Activated CD4-positive, alpha-beta T cell treated with anti-CD3 and anti-CD28 coated beads for 36 hours (primary cell): ENCODE measurements at regions of chr14 and their contacts with region 1.

Region 1: GRCh38 chr14:37874429-37875191 is 279.2 kb downstream of the TTC6 start:
- DNase-seq: peak; percentile 89
- ATAC-seq: peak; percentile 84
- H3K4me3 Mint-ChIP-seq: no peak overlapping the region
- H3K27ac Mint-ChIP-seq: no peak overlapping the region
- H3K4me1 Mint-ChIP-seq: peaks cover 5% of the 10 kb centered on the region
- H3K27me3 Mint-ChIP-seq: no peaks in the 10 kb centered on the region

Region 2: GRCh38 chr14:37230551-37231194 is 643.9 kb before region 1 on chr14:
- CTCF ChIA-PET with region 1: interaction called, 10 read pairs
- POLR2A ChIA-PET with region 1: no interaction called
- intact Hi-C with region 1: loop called (anchors 1 to 5 kb)
- DNase-seq: no peak
- ATAC-seq: peak; percentile 30
- H3K4me3 Mint-ChIP-seq: no peak overlapping the region
- H3K27ac Mint-ChIP-seq: no peak overlapping the region
- H3K4me1 Mint-ChIP-seq: no peaks in the 10 kb centered on the region
- H3K27me3 Mint-ChIP-seq: no peaks in the 10 kb centered on the region

Region 3: GRCh38 chr14:37246427-37246914 is 628.1 kb before region 1 on chr14:
- CTCF ChIA-PET with region 1: interaction called, 9 read pairs
- POLR2A ChIA-PET with region 1: no interaction called
- intact Hi-C with region 1: loop called (anchors 1 kb)
- DNase-seq: no peak
- ATAC-seq: no peak
- H3K4me3 Mint-ChIP-seq: no peak overlapping the region
- H3K27ac Mint-ChIP-seq: no peak overlapping the region
- H3K4me1 Mint-ChIP-seq: no peaks in the 10 kb centered on the region
- H3K27me3 Mint-ChIP-seq: no peaks in the 10 kb centered on the region

Region 4: GRCh38 chr14:37709419-37710195 is 165.0 kb before region 1 on chr14:
- CTCF ChIA-PET with region 1: no interaction called
- POLR2A ChIA-PET with region 1: no interaction called
- intact Hi-C with region 1: loop called (anchors 2 to 10 kb)
- DNase-seq: no peak
- ATAC-seq: no peak
- H3K4me3 Mint-ChIP-seq: no peak overlapping the region
- H3K27ac Mint-ChIP-seq: no peak overlapping the region
- H3K4me1 Mint-ChIP-seq: no peaks in the 10 kb centered on the region
- H3K27me3 Mint-ChIP-seq: peaks cover 5% of the 10 kb centered on the region